ENCODE measurements at regions of chr15 and their contacts with region 1.

Region 1: DNA sequence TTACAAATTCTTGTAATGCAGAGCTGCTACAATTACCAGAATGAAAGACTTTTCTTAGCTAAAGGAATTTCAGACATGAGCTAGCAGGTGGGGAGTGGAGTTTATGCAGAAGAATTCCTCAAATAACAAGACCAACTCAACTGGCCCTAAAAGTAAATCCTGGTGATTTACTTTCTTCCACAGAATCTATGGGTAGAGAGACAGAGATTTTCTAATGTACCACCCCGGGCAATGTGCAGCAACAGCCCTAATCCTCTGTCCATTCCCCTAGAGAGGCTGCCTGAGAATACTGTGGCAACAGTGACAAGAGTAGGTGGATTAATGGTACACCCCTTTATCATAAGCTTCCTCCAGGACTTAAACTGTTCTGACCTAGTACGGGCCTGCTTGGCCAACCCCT is 55.2 kb downstream of the AQR start:
- DNase-seq: no peak
- H3K4me3 ChIP-seq: no peak overlapping the region
- H3K27ac ChIP-seq: no peak overlapping the region
- H3K27me3 ChIP-seq: no peaks in the 10 kb centered on the region
- CTCF ChIP-seq: no peak

Region 2: GRCh38 chr15:34610354-34610753 is 304.0 kb before region 1 on chr15:
- CTCF ChIA-PET with region 1: interaction called, 12 read pairs
- POLR2A ChIA-PET with region 1: no interaction called
- DNase-seq: no peak
- H3K4me3 ChIP-seq: no peak overlapping the region
- H3K27ac ChIP-seq: no peak overlapping the region
- H3K27me3 ChIP-seq: no peaks in the 10 kb centered on the region
- CTCF ChIP-seq: peak; percentile 59

Region 3: GRCh38 chr15:34708422-34708821 is 205.9 kb before region 1 on chr15:
- CTCF ChIA-PET with region 1: interaction called, 91 read pairs
- POLR2A ChIA-PET with region 1: interaction called, 5 read pairs
- DNase-seq: peak; percentile 32
- H3K4me3 ChIP-seq: no peak overlapping the region
- H3K27ac ChIP-seq: no peak overlapping the region
- H3K27me3 ChIP-seq: no peaks in the 10 kb centered on the region
- CTCF ChIP-seq: peak; percentile 96

Region 4: DNA sequence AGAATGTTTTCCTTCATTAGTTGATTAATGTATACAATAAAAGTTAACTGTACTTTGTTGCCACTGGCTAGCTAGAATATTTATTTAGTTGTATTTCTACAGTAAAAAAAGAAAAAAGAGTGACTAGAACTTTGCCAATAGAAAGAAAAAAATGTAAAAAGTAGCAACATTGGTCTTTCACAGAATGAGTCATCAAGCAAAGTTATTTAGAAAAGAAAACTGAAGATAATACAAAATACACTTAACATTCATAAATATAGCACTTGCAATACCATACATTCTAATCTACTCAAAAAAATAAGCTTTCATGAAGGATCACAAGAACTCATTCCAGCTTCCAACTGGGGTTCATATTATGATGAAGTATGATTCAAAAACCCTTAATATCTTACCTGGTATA is 28.2 kb before region 1 on chr15:
- CTCF ChIA-PET with region 1: interaction called, 17 read pairs
- POLR2A ChIA-PET with region 1: no interaction called
- DNase-seq: no peak
- H3K4me3 ChIP-seq: no peak overlapping the region
- H3K27ac ChIP-seq: no peak overlapping the region
- H3K27me3 ChIP-seq: no peaks in the 10 kb centered on the region
- CTCF ChIP-seq: no peak

Region 5: GRCh38 chr15:34927726-34928125 is 13.4 kb after region 1 on chr15:
- CTCF ChIA-PET with region 1: no interaction called
- POLR2A ChIA-PET with region 1: no interaction called
- DNase-seq: no peak
- H3K4me3 ChIP-seq: no peak overlapping the region
- H3K27ac ChIP-seq: no peak overlapping the region
- H3K27me3 ChIP-seq: no peaks in the 10 kb centered on the region
- CTCF ChIP-seq: no peak

Region 6: DNA sequence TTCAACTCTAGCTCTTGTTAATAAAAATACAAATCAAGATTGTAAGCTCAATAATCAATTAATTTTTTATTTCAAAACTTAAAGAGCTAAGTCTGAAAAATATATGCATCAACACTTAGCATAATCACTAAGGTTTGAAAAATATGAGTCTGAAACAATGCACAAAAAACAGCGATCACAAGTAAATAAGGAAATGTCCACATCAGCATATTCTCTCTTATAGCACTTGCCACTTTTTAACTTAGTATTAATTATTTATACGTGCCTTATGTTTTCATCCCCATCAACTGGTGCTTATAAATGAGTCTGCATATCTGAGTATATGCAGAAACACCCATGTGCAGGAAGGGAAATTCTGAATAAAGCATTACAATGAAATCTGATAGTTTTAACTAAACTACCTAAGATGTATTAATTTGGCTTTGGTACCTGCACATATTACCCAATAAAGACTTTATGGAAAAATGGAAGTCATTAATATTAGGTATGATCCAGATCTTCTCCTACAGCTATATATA is 26.9 kb after region 1 on chr15:
- CTCF ChIA-PET with region 1: interaction called, 13 read pairs
- POLR2A ChIA-PET with region 1: no interaction called
- DNase-seq: no peak
- H3K4me3 ChIP-seq: no peak overlapping the region
- H3K27ac ChIP-seq: no peak overlapping the region
- H3K27me3 ChIP-seq: no peaks in the 10 kb centered on the region
- CTCF ChIP-seq: no peak

Region 7: DNA sequence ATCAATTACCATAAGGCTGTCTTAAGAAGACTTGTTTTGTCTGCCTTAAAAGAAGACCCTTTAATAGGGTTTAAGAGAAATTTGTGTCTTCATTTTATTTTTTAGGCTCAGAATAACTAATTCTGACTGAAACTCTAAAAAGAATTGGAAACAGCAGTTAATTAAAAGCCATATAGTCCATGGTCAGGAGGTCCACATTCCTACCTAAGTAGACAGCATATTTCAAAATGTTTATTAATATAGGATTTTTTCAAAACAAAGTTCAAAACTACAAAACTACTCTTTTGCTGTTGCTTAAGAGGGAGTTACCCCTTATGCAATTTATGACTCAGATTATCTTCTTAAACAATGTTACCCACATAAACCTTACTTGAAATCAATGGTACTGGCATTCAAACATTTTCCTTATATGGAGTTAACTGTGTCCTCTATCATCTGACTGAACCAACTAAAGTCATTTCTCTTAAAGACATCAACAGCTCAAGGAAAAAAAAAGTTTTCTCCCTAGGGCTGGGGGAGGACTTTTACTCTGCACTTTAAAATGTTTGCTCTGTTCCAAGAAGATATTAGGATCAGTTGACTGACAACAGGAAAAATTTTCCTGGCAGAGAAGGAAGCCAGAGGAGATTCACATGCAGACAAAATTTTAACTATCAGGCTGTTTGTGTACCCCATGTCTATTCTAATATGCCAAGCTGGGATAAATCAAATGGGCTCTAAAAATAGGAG is 227.6 kb after region 1 on chr15:
- CTCF ChIA-PET with region 1: no interaction called
- POLR2A ChIA-PET with region 1: no interaction called
- DNase-seq: peak; percentile 86
- H3K4me3 ChIP-seq: no peak overlapping the region
- H3K27ac ChIP-seq: peak overlapping the region; percentile 40
- H3K27me3 ChIP-seq: no peaks in the 10 kb centered on the region
- CTCF ChIP-seq: no peak